PC-3 (cell line): ENCODE measurements at regions of chr1 and their contacts with region 1.

Region 1: DNA sequence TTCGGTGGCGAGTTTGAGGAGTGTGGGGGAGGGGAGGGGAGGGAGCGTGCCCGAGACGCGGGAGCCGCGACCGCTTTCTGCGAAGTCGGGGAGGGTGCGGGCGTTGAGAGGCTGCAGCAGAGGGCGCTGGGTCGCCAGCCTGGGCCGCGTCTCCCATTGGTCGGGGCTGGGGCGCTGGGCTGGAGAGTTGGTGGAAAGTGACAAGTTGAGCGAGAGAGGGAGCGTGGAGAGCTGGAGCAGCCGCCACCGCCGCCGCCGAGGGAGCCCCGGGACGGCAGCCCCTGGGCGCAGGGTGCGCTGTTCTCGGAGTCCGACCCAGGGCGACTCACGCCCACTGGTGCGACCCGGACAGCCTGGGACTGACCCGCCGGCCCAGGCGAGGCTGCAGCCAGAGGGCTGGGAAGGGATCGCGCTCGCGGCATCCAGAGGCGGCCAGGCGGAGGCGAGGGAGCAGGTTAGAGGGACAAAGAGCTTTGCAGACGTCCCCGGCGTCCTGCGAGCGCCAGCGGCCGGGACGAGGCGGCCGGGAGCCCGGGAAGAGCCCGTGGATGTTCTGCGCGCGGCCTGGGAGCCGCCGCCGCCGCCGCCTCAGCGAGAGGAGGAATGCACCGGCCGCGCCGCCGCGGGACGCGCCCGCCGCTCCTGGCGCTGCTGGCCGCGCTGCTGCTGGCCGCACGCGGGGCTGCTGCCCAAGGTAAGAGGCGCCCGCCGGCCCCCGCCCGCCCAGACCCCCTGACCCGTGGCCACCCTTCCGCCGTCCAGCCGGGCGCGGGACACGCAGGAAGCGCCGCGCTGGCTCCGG is at the start of gene ROR1:
- DNase-seq: peak; percentile 87
- ATAC-seq: peak; percentile 88
- H3K4me3 ChIP-seq: peak within 1 kb of the TSS; percentile 93
- H3K27ac ChIP-seq: peak within 1 kb of the TSS; percentile 85
- H3K4me1 ChIP-seq: peaks cover 34% of the 10 kb centered on the region
- H3K27me3 ChIP-seq: no peaks in the 10 kb centered on the region
- CTCF ChIP-seq: peak; percentile 72
- total RNA-seq, gene ROR1: 16.5 and 22.6 TPM in 2 replicates

Region 2: DNA sequence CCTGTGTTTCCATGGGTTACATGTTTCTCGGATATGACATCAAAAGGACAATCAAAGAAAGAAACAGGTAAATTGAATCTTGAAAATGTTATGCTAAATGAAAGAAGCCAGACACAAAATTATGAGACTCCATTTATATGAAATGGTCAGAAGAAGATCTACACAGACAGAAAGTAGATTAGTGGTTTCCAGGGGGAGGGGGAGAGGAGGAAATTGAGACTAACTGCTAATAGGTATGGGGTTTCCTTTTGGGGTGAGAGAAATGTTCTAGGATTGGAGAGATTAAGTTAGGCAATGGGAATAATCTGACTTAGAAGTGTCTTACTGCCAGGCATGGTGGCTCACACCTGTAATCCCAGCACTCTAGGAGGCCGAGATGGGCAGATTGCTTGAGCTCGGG is 272.8 kb before region 1 on chr1:
- CTCF ChIA-PET with region 1: no interaction called
- POLR2A ChIA-PET with region 1: no interaction called
- intact Hi-C with region 1: no loop called
- DNase-seq: no peak
- ATAC-seq: no peak
- H3K4me3 ChIP-seq: no peak overlapping the region
- H3K27ac ChIP-seq: no peak overlapping the region
- H3K4me1 ChIP-seq: no peaks in the 10 kb centered on the region
- H3K27me3 ChIP-seq: no peaks in the 10 kb centered on the region
- CTCF ChIP-seq: no peak

Region 3: GRCh38 chr1:63705078-63705477 is 68.9 kb before region 1 on chr1:
- CTCF ChIA-PET with region 1: interaction called, 3 read pairs
- POLR2A ChIA-PET with region 1: no interaction called
- intact Hi-C with region 1: loop called (anchors 2 kb)
- DNase-seq: no peak
- ATAC-seq: no peak
- H3K4me3 ChIP-seq: no peak overlapping the region
- H3K27ac ChIP-seq: peak overlapping the region; percentile 79
- H3K4me1 ChIP-seq: peaks cover 45% of the 10 kb centered on the region
- H3K27me3 ChIP-seq: no peaks in the 10 kb centered on the region
- CTCF ChIP-seq: no peak

Region 4: GRCh38 chr1:63746129-63746864 is 27.7 kb before region 1 on chr1:
- CTCF ChIA-PET with region 1: interaction called, 4 read pairs
- POLR2A ChIA-PET with region 1: no interaction called
- intact Hi-C with region 1: loop called (anchors 1 kb)
- DNase-seq: peak; percentile 93
- ATAC-seq: peak; percentile 96
- H3K4me3 ChIP-seq: peak overlapping the region; percentile 31; the same call in 1 of the 2 replicates
- H3K27ac ChIP-seq: peak overlapping the region; percentile 100
- H3K4me1 ChIP-seq: peaks cover 25% of the 10 kb centered on the region
- H3K27me3 ChIP-seq: no peaks in the 10 kb centered on the region
- CTCF ChIP-seq: no peak

Region 5: DNA sequence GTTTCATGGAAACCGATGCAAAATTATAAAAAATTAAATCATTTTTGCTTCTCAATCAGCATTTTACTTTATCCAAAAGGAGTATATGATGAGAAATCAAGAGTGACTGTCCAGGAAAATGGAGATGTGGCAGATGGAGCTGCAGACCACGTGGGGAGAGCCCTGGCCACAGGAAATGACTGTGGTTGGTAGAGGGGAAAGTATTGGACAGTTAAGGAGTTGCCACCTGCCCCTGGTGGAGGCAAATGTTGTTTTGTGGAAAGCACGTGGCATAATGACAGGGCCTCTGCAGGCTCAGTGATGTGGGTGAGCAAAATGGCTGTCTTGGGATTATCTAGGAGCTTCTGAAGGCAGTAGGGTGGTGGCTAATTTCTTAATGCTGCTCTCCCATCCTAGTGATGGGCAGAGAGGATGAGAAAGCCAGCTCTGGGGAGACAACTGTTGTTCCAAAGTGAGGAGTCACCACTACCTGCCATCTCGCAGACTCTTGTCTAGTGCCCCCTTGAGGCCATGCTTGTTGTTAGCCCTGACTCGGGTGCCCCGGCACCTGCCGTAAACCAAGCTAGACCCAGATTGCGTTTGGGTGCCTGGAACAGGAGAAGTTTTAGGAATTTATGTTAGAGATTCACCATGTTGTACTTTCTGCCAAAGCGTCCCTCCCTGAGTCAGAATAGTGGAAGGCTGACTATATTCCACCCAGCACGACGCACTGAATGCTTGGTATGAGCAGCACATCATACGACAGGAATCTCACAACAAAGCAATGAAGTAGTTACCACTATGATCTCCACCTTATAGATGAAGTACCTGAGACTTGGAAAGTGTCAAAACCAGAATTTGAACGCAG is 143.8 kb after region 1 on chr1:
- CTCF ChIA-PET with region 1: interaction called, 10 read pairs
- POLR2A ChIA-PET with region 1: no interaction called
- intact Hi-C with region 1: loop called (anchors 5 kb)
- DNase-seq: peak; percentile 29
- ATAC-seq: no peak
- H3K4me3 ChIP-seq: no peak overlapping the region
- H3K27ac ChIP-seq: no peak overlapping the region
- H3K4me1 ChIP-seq: peaks cover 25% of the 10 kb centered on the region
- H3K27me3 ChIP-seq: no peaks in the 10 kb centered on the region
- CTCF ChIP-seq: peak; percentile 53

Region 6: GRCh38 chr1:64136752-64137411 is 362.9 kb after region 1 on chr1:
- CTCF ChIA-PET with region 1: interaction called, 7 read pairs
- POLR2A ChIA-PET with region 1: no interaction called
- intact Hi-C with region 1: loop called (anchors 1 kb)
- DNase-seq: peak; percentile 93
- ATAC-seq: peak; percentile 51
- H3K4me3 ChIP-seq: no peak overlapping the region
- H3K27ac ChIP-seq: no peak overlapping the region
- H3K4me1 ChIP-seq: peaks cover 42% of the 10 kb centered on the region
- H3K27me3 ChIP-seq: no peaks in the 10 kb centered on the region
- CTCF ChIP-seq: peak; percentile 95